GM18951 (cell line): ENCODE measurements at regions of chr5 and their contacts with region 1.

Region 1: DNA sequence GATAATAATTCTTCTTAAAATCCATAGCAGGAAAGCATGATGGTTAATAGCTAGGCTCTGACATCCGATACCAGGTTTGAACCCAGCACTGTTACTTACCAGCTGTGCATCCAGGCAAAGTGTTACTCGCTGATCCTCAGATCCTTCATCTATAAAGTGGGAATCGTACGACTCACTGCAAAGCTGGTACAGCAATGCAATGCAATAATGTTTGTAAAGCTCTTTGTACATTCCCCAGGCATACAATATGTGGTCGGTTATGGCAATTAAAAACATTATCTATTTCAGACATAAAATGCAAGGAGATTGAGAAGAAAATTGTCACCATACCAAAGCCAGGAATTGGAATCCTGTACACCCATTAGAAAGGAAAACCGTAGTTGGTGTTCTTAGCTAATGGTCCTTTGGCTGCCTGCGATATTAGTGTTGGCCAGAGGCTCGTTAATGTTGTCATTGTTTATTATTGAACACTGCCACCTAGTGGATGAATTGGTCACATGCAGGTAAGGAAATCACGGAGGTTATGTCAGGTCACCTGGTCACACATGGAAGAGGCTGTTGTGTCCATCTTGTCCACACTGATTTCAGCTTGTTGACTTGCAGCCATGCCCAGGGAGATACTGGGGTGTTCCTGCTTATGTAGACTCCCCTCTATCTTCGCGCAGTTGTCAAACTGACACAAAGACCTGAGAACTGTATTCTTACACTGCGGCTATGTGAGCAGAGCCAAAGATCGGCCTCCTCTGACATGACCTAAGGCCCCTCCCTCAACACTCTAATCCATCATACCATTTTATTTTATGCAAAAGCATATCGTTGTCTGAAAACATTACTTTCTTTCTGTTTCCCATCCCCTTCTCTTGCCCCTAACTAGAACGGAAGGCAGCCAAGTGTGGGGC is 87.5 kb upstream of the PPP2R2B start:
- POLR2A ChIP-seq: no peak

Region 2: DNA sequence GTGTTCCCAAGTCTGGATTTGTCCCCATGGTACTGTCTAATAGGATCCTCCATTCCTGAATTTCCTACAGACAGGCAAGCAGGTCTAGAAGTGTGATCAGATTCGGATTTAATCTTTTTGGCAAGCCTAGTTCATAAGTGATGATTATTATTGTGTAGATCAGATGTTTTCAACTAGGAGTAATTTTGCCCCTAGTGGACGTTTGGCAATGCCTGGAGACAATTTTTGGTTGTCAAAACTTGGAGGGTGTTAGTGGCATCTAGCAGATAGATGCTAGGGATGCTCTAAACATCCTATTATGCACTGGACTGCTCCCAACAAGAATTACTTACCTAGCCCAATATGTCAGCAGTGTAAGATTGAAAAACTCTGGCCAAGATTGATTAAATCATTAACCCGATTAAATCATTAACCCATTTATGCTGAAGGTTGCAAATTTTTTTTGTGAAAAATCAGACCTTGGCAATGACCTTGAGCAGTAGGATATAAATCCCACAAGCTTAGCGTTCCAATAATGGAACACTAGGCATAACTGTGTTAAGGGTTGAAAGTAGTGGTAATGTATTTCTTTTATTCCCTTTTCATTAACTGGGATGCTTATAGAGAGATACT is 490.7 kb before region 1 on chr5:
- in situ Hi-C with region 1: no loop called
- POLR2A ChIP-seq: no peak

Region 3: DNA sequence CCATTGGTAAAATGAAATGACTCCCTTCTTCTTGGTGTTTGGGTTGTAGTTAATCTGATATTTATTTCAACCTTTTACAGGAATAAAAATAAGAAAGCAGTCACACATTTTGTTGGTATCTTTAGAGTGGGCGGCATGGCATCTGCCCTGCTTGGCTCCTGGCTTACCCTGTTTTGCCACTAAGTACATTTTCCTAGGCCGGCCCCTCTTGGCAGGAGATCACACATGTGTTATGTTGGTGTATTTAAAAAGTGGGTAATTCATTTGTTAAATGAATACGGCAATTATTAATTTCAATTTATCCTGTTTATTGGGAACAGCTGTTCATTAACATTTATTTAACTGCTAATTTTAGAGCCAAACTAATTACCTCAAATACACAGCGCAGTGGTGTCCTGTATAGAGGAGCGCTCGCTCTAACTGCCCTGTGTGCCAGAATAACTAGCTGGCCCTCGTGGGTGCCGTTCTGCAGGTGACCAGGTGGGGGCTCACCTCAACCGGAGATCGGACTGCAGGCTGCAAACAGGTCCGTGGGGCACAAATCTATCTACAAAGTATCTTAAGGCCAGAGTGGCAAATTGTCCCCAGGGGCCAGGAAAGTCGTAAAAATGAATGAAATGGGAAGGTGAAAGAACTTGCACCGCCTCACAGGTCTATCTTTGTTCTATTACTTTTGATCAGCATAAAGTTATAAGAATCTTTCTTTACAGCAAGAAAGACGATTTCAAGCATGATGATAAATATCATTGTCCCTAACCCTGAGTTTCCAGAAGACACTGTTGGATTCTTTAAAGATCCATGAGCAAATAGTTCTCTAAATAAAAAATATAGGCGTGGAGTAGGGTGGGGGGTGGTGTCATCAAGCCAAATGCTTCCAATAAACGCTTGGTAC is 423.8 kb before region 1 on chr5:
- in situ Hi-C with region 1: loop called (anchors 10 kb)
- POLR2A ChIP-seq: no peak

Region 4: DNA sequence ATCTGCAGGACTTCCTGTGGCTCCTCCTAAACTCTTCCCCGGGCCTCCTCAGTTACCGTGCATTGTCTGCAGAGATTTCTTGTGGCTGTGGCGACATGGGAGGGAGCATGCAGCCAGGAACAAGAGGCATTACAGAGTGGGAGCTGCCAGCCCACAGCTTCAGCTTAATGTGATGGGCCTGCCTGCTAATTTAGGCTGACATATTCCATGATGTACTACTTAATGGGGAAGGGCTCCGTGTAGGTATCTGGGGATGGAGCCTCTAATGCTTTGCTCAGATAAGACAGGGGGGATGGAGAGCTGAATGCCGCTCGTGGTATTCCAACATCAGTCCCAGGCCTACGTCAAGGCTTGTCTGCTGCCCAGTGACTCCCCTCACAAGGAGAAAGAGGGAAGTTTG is 312.4 kb before region 1 on chr5:
- in situ Hi-C with region 1: loop called (anchors 10 kb)
- POLR2A ChIP-seq: no peak

Region 5: GRCh38 chr5:146675636-146676035 is 290.4 kb before region 1 on chr5:
- in situ Hi-C with region 1: no loop called
- POLR2A ChIP-seq: no peak